ENCODE measurements at regions of chr11 and their contacts with region 1.

Region 1: DNA sequence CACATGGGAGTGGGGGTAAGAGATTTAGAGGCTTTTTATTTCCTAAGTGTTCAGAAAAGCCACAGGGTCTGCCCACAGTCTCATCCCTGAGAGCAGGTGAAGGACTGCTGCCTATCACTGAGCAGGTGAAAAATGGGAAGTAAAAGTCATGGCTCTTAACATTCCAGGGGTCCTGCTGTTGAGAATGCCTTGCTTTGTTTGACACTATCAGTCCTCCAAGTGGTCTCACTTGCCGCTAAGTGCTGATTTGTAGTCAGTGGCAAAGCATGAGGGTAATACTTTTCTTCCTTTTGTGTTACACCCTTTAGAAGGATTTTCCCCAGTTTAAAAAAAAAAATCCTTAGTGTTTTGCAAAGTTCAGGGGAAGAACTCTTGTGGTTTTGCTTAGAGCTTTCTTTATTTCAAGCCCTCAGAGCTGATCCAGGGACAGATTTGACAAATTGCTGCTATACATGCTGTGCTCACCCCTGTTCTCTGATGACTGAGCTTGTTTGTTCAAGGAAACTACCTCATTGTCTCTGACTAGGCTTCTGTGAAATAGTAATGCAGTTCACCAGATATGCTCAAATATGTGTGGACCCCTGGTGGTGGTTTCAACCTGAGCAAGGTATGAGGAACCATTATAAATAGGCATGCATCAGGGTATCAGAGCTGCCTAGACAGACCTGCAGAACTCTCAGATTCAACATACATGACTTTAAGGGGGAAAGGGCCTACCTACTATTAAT is 141.0 kb downstream of the ARHGAP42 start:
- DNase-seq: no peak
- ATAC-seq: peak; percentile 70
- H3K4me3 ChIP-seq: no peak overlapping the region
- H3K27ac ChIP-seq: no peak overlapping the region
- H3K4me1 ChIP-seq: peaks cover 7% of the 10 kb centered on the region
- H3K27me3 ChIP-seq: no peaks in the 10 kb centered on the region
- CTCF ChIP-seq: peak; percentile 48

Region 2: DNA sequence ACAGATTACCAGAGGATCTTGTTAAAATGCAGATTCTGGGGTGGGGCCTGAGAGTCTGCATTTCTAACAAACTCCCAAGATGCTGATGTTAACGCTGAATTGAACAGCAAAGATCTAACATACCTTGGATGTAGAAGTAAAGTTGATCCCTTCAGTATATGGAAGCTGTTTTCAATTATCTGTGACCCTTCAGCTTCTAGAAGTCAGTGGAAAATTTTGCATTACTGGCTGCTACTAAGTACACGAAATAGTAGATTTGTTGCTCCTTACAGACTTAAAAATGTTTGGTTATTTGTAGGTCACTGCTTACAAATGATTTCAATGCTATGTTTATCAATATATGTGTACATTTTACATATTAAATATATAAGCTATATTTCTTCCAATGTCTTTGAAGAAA is 33.7 kb before region 1 on chr11:
- CTCF ChIA-PET with region 1: no interaction called
- POLR2A ChIA-PET with region 1: interaction called, 17 read pairs
- in situ Hi-C with region 1: no loop called
- intact Hi-C with region 1: no loop called
- DNase-seq: no peak
- ATAC-seq: no peak
- H3K4me3 ChIP-seq: no peak overlapping the region
- H3K27ac ChIP-seq: no peak overlapping the region
- H3K4me1 ChIP-seq: no peaks in the 10 kb centered on the region
- H3K27me3 ChIP-seq: no peaks in the 10 kb centered on the region
- CTCF ChIP-seq: no peak

Region 3: GRCh38 chr11:100892886-100893285 is 64.8 kb after region 1 on chr11:
- CTCF ChIA-PET with region 1: no interaction called
- POLR2A ChIA-PET with region 1: no interaction called
- in situ Hi-C with region 1: no loop called
- intact Hi-C with region 1: no loop called
- DNase-seq: no peak
- ATAC-seq: no peak
- H3K4me3 ChIP-seq: no peak overlapping the region
- H3K27ac ChIP-seq: no peak overlapping the region
- H3K4me1 ChIP-seq: no peaks in the 10 kb centered on the region
- H3K27me3 ChIP-seq: no peaks in the 10 kb centered on the region
- CTCF ChIP-seq: no peak

Region 4: DNA sequence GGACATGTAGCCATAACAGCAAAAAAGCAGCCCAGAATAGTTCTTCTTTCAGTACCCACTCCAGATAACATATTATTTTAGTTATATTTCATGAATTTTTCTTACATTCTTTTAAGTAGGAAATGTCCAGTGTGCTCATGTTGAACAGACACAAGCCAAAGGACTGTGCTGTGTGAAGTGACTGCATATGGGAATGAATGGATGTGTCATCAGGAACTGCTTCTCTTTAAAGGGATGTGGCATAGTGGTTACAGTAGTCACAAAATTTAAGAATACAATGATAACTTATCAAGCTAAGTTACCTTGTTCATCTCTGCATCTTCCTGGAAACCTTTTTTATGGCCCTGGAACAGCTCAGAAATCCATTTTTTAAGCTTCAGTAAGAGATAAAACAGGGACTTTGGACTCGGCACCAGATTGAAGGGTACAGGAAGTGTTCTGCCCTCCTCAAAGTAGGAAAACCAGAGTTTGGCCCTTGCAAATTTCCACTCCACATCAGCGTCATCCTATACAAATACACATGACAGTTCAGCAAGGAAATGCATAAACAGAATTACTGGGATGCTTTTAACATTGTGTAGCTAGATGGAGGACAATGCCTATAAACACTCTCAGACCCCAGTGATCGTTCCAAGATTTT is 642.9 kb after region 1 on chr11:
- CTCF ChIA-PET with region 1: no interaction called
- POLR2A ChIA-PET with region 1: no interaction called
- in situ Hi-C with region 1: no loop called
- intact Hi-C with region 1: no loop called
- DNase-seq: no peak
- ATAC-seq: no peak
- H3K4me3 ChIP-seq: no peak overlapping the region
- H3K27ac ChIP-seq: no peak overlapping the region
- H3K4me1 ChIP-seq: no peaks in the 10 kb centered on the region
- H3K27me3 ChIP-seq: no peaks in the 10 kb centered on the region; the same call in 1 of the 2 replicates
- CTCF ChIP-seq: no peak

Measured in Panc1 (cell line).